OCI-LY7 (cell line): ENCODE measurements at regions of chr4 and their contacts with region 1.

Region 1: GRCh38 chr4:77745792-77746191 is 73.4 kb downstream of the CNOT6L start:
- DNase-seq: no peak
- H3K4me3 ChIP-seq: no peak overlapping the region
- H3K27ac ChIP-seq: no peak overlapping the region
- H3K4me1 ChIP-seq: no peaks in the 10 kb centered on the region
- CTCF ChIP-seq: no peak

Region 2: GRCh38 chr4:77758804-77759203 is 13.0 kb after region 1 on chr4:
- CTCF ChIA-PET with region 1: no interaction called
- POLR2A ChIA-PET with region 1: interaction called, 13 read pairs
- intact Hi-C with region 1: no loop called
- DNase-seq: no peak
- H3K4me3 ChIP-seq: no peak overlapping the region
- H3K27ac ChIP-seq: no peak overlapping the region
- H3K4me1 ChIP-seq: no peaks in the 10 kb centered on the region
- CTCF ChIP-seq: no peak

Region 3: GRCh38 chr4:77777135-77777807 is 31.5 kb after region 1 on chr4:
- CTCF ChIA-PET with region 1: no interaction called
- POLR2A ChIA-PET with region 1: no interaction called
- intact Hi-C with region 1: no loop called
- DNase-seq: no peak
- H3K4me3 ChIP-seq: no peak overlapping the region
- H3K27ac ChIP-seq: no peak overlapping the region
- H3K4me1 ChIP-seq: peaks cover 3% of the 10 kb centered on the region
- CTCF ChIP-seq: no peak

Region 4: DNA sequence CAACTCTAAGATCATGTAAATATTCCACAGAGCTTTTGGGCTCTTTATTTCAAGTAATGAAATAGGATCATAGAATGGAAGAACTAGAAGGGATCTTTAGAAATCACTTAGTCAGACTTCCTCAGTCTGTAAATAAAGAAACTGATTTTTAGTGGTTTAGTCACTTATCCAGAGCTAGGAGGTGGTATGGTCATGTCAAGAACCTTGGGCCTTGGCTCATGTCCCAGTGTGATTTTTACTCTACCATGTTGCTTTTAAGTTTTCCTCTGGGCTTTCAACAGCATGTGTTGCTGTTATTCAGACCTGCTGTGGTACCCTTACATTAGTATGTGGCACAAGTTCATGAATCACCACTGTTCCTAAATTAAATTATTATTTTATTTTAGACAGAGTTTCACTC is 496.3 kb after region 1 on chr4:
- CTCF ChIA-PET with region 1: no interaction called
- POLR2A ChIA-PET with region 1: no interaction called
- intact Hi-C with region 1: no loop called
- DNase-seq: no peak
- H3K4me3 ChIP-seq: no peak overlapping the region
- H3K27ac ChIP-seq: no peak overlapping the region
- H3K4me1 ChIP-seq: no peaks in the 10 kb centered on the region
- CTCF ChIP-seq: no peak